Activated T-helper 1 cell treated with anti-CD3 and anti-CD28 coated beads, Interleukin-12 subunit alpha, Interleukin-12 subunit beta, Interleukin-2, Interleukin-4 antibody, amounts not matched to agents 30 ng/mL and 10 ng/mL and 1 ng/mL, durations not matched to agents 14 hours and 24 hours and 36 hours (primary cell): ENCODE measurements at regions of chr16 and their contacts with region 1.

Region 1: DNA sequence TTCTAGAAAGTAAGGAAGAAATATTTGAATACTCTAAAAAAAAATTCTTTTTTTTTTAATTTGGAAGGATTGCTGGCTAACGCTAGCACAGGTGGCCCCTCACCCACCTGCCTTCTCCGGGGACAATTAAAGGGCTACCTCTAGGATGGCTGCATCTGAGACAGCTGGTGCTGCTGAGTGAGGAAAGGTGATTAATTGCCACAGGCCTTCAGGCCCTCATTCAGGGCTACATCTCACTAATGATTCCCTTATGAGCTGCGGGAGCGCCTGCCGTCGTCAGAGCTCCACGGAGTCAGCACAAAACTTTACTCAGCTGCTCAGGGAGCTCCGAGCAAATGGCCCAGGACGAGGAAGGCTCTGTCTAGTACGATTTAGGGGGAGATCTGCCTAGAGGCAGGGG is 27.0 kb upstream of the AKTIP start:
- DNase-seq: no peak
- H3K4me3 Mint-ChIP-seq: no peak overlapping the region
- H3K27ac Mint-ChIP-seq: no peak overlapping the region
- H3K4me1 Mint-ChIP-seq: peaks cover 18% of the 10 kb centered on the region
- H3K27me3 Mint-ChIP-seq: no peaks in the 10 kb centered on the region

Region 2: DNA sequence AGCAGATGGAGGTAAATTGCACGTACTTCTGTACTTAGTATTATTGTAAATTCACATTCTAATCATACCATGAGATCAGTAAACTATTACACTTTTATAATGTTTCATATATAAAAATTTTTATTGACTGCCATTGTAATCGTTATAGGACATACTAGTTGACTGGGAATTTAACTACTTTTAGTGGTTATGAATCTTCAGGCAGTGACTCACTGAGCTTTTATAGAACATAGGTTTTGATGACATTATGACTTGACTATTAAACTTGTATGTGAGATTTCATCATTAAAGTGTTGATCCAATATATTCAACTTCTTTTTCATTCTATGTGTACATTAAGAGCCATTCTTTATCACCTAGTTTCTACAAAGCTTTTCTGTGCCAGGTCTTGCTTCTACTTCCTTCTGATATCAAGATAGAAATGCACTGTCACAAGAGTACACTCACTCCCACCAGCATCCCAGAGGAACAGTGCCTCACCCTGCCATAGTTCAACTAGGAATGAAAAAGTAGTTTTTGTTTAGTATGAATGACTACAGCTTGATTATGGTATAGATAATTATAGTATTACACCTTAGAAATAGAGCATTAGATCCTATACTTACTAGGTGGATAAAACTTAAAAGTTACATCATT is 238.2 kb before region 1 on chr16:
- intact Hi-C with region 1: no loop called
- DNase-seq: no peak
- H3K4me3 Mint-ChIP-seq: no peak overlapping the region
- H3K27ac Mint-ChIP-seq: no peak overlapping the region
- H3K4me1 Mint-ChIP-seq: no peaks in the 10 kb centered on the region
- H3K27me3 Mint-ChIP-seq: no peaks in the 10 kb centered on the region

Region 3: GRCh38 chr16:53457670-53458069 is 72.4 kb before region 1 on chr16:
- intact Hi-C with region 1: loop called (anchors 1 kb)
- DNase-seq: peak; percentile 80
- H3K4me3 Mint-ChIP-seq: peak overlapping the region; percentile 73
- H3K27ac Mint-ChIP-seq: peak overlapping the region; percentile 94
- H3K4me1 Mint-ChIP-seq: peaks cover 88% of the 10 kb centered on the region
- H3K27me3 Mint-ChIP-seq: no peaks in the 10 kb centered on the region

Region 4: DNA sequence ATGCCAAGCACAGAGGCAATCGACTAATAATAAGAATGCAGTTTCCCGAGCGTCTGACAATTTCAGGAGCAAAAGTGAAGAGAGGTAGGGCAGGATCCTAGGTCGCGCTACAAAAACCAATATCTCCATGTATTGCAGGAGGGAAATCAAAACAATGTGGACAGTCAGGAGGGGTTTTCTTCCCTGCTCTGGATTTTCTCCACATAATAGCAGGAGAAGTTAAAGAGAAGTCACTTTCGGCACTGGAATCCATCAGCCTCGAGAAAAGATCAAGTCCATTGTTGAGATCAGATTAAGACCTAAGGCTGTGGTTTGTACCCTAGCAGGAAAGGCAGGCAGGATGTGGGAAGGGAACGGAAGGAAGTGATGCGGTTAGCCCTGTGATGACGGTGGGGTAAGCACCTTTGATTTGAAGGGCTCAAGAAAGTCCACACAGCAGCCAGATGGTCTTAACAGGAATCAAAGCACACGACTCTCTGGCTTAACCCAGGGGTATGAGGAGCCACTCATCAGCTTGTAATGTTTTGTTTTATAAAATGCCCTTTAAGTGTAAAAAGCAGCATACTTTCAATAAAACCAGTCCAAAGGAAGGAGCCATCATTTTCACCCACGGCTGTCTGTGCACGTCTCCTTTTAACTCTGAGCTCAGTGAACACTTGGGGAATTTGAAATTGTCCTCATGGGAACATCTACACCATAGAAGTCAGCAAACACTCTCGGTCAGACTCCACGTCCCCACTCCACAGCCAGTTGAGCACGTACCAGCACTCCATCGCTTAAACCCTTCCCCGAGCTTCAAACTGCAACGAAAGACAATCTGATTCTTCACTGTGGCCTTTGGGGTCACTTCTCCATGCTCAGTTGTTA is 11.3 kb before region 1 on chr16:
- intact Hi-C with region 1: loop called (anchors 1 kb)
- DNase-seq: peak; percentile 83
- H3K4me3 Mint-ChIP-seq: peak overlapping the region; percentile 63
- H3K27ac Mint-ChIP-seq: peak overlapping the region; percentile 82
- H3K4me1 Mint-ChIP-seq: peaks cover 58% of the 10 kb centered on the region
- H3K27me3 Mint-ChIP-seq: peaks cover 2% of the 10 kb centered on the region